Esophagus muscularis mucosa (tissue), 4 donors: ENCODE measurements at regions of chr6 and their contacts with region 1.

Region 1: DNA sequence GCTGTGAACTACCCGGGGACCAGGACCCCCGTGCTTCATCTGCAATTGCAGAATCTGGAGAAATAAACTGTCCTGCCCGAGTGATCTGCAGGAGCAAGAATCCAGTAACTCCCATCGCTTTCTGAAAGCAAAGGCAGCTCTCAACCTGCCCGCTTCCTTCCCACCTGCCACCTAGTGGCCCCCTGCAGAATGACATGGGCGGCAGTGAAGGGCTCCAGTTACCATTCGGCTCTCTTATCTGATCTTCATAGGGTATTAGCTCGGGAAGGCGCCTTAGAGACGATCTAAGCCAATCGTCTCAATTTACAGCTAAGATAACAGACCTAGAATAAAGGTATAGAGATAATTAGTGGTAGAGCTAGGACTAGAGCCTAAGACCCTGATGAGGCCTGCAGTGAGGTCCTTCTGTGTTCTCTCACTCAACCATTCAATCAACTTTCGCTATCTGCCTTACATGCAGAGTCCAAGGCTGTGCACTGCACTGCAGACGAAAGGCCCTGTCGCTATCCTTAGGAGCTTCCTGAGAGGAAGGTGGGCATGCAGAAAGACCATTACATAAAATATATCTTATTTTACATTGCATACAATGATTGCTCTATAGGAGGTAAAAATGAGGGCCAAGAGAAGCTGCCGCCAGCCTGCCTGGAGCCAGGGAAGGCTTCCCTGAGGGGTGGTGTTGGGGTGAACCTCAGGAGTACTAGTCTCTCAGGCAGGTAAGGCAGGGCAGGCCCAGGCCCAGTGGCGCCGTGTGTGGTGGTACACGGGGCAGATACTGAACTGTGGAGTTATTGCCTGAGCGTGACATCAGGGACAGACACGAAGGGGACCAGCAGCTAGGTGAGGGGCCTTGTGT is 7.1 kb upstream of the PSMG4 start:
- DNase-seq: peak; percentile 95
- H3K4me3 ChIP-seq: peak overlapping the region in 2 of 4 donors; percentile 21 to 27
- H3K27ac ChIP-seq: no peak overlapping the region
- H3K4me1 ChIP-seq: peaks cover 23 to 50% (median 45%) of the 10 kb centered on the region in 4 donors
- H3K27me3 ChIP-seq: no peaks in the 10 kb centered on the region
- CTCF ChIP-seq: peak in 2 of 3 experiments; percentile 97 to 99
- EP300 ChIP-seq: no peak
- POLR2A ChIP-seq: no peak

Region 2: DNA sequence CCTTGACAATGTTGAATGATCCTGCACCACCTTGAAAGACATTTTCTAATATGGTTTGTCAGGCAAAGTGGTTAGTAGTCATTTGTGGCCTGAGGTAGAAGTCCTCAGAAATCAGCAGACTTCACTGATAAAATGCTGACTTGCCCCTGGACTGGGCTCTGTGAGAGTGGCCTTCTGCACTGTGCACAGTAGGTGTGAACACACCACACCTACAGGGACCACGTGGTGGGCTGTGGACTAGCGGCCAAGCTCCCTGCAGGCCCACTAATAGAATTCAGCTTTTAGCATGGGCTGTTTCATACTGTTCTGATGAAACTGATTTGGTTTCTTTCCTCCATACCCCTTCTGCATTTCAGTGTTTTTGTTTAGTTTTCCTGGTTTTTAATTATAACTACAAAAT is 125.9 kb before region 1 on chr6:
- intact Hi-C with region 1: loop called (anchors 1 kb)
- DNase-seq: no peak
- H3K4me3 ChIP-seq: no peak overlapping the region
- H3K27ac ChIP-seq: no peak overlapping the region
- H3K4me1 ChIP-seq: peaks cover 0 to 4% (median 0%) of the 10 kb centered on the region in 4 donors
- H3K27me3 ChIP-seq: no peaks in the 10 kb centered on the region
- CTCF ChIP-seq: no peak
- EP300 ChIP-seq: no peak
- POLR2A ChIP-seq: no peak

Region 3: DNA sequence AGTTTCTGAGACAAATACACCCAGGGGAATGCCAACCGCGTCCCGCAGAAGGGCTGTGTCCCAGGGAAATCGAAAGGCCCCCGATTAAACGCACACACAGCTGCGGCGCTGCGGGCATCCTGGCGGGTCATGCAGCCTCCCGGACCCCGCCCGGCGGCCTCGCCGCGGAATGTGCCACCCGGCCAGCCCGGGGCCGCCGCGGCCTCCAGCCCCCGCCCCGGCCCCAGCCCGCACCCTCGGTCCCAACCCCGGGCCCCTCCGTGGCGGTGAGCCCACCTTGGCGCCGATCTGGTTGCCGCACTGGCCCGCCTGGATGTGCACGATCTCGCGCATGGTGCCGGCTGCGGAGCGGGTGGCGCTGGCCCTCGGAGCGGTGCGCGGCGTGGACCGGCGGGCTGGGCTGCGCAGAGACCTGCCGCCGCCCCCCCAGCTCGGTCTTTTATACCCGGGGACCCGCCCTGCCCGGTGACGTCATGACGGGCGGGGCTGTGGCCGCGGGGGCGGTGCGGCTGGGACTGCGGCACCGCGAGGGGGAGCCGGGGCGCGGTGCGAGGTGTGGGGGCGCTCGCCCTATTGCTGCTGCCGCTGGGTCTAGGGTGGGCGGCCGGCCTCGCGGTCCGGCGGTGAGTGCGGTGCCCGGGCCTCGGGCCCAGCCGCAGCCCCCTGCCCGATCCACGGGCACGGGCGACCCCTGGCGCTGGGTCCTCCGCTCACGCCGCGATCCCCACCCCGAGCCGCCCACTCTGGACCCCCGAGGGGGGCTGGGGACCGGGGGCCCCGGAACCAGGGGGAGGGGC is 94.4 kb before region 1 on chr6 and contains the start of gene TUBB2A:
- intact Hi-C with region 1: loop called (anchors 2 kb)
- DNase-seq: no peak
- H3K4me3 ChIP-seq: peak within 1 kb of the TSS; percentile 88 to 99 (median 96)
- H3K27ac ChIP-seq: peak within 1 kb of the TSS; percentile 99 to 100 (median 100)
- H3K4me1 ChIP-seq: peaks cover 0 to 55% (median 49%) of the 10 kb centered on the region in 4 donors
- H3K27me3 ChIP-seq: no peaks in the 10 kb centered on the region
- CTCF ChIP-seq: peak; percentile 45 to 66 (median 55)
- EP300 ChIP-seq: no peak
- POLR2A ChIP-seq: peak; percentile 89
- total RNA-seq, gene TUBB2A: 90.1 to 181 (median 146) TPM